Calu3 (cell line): ENCODE measurements at regions of chr9 and their contacts with region 1.

Region 1: DNA sequence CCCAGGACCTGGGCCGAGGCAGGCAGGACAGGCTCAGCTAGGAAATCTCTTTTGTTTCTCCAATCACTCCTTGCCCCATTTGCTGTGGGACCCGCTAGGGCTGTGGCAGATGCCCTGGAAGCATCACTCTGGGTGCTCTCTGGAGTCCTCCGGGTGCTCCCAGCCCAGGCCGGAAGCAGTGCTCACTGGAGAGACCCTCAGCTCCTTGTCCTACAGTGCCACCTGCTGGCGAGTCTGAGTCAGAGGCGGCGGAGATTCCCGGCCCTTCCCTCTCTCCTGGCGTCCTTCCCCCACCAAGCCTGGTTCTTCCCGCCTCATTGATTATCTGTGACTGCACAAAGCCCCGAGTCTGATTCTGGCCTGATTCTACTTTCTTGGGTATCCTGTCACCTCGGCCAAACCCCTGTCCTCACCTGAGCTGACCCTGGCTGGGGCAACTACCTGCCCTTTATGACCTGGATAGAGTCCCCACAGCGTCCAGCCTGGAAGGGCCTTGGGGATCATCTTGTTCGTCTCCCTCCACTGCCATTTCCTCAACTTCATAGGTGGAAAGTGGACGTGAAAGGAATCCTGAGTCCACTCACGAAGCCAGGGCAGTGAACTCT is 7.3 kb upstream of the BARHL1 start:
- DNase-seq: peak; percentile 84
- H3K4me3 Mint-ChIP-seq: no peak overlapping the region
- H3K27ac Mint-ChIP-seq: no peak overlapping the region
- H3K4me1 Mint-ChIP-seq: peaks cover 10% of the 10 kb centered on the region
- H3K27me3 Mint-ChIP-seq: peaks cover 41% of the 10 kb centered on the region
- CTCF ChIP-seq: peak; percentile 87

Region 2: GRCh38 chr9:132141344-132141947 is 433.7 kb before region 1 on chr9:
- CTCF ChIA-PET with region 1: no interaction called
- intact Hi-C with region 1: no loop called
- DNase-seq: no peak
- H3K4me3 Mint-ChIP-seq: no peak overlapping the region
- H3K27ac Mint-ChIP-seq: no peak overlapping the region
- H3K4me1 Mint-ChIP-seq: no peaks in the 10 kb centered on the region
- H3K27me3 Mint-ChIP-seq: peaks cover 92% of the 10 kb centered on the region
- CTCF ChIP-seq: no peak

Region 3: GRCh38 chr9:132411091-132411508 is 164.0 kb before region 1 on chr9:
- CTCF ChIA-PET with region 1: interaction called, 3 read pairs
- intact Hi-C with region 1: loop called (anchors 5 kb)
- DNase-seq: peak; percentile 73
- H3K4me3 Mint-ChIP-seq: peak overlapping the region; percentile 52
- H3K27ac Mint-ChIP-seq: no peak overlapping the region
- H3K4me1 Mint-ChIP-seq: peaks cover 9% of the 10 kb centered on the region
- H3K27me3 Mint-ChIP-seq: peaks cover 31% of the 10 kb centered on the region
- CTCF ChIP-seq: peak; percentile 64

Region 4: DNA sequence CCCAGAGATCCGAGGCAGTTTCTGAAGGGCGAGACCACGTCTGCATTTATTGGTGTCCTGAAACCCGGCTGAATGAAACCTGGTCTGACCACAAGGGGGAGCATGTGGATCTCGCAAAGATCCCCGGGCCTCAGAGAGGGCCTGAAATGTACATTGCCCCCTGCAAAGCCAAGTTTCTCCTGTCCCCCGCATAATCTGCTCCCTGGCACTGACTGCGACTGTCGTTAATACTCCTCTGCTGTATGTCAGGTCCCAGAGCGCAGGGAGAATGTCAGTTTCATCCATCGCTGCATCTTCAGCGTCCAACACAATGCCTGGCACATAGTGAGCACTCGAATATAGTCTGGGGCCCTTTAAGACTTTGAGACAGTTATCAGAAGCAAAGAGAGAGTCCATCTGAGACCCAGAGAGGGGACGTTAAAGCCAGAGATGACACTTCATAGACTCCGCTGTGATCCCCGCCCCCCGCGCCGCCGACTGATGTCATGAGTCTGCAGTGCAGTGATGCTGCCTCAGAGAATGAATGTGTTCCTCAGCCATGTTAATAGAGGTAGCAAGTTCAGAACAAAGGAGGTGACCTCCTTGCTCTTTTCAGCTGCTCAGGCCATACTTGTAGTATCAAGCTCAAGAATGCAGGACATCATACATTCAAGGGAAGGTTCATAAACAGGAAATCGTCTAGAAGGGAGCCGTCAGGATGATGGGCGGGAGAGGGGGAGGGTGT is 67.2 kb before region 1 on chr9:
- CTCF ChIA-PET with region 1: no interaction called
- intact Hi-C with region 1: loop called (anchors 2 kb)
- DNase-seq: peak; percentile 75
- H3K4me3 Mint-ChIP-seq: no peak overlapping the region
- H3K27ac Mint-ChIP-seq: no peak overlapping the region
- H3K4me1 Mint-ChIP-seq: no peaks in the 10 kb centered on the region
- H3K27me3 Mint-ChIP-seq: peaks cover 9% of the 10 kb centered on the region
- CTCF ChIP-seq: peak; percentile 55

Region 5: DNA sequence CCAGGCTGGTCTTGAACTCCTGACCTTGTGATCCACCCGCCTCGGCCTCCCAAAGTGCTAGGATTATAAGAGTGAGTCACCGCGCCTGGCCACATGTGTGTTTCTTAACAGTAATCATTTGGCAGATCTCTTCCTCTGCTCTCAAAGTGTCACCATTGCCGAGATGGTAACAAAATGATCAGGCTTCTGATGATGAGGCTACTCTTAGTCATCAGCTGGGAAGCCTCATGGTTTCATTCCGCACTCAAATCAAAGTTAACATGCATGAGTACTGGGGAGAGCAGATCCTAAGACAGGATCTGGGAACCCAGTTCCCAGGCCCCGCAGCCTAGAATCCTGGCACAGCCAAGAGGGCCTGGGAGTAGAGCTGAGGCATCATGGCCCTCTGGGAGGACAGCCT is 34.7 kb after region 1 on chr9:
- CTCF ChIA-PET with region 1: interaction called, 11 read pairs
- intact Hi-C with region 1: no loop called
- DNase-seq: no peak
- H3K4me3 Mint-ChIP-seq: no peak overlapping the region
- H3K27ac Mint-ChIP-seq: no peak overlapping the region
- H3K4me1 Mint-ChIP-seq: no peaks in the 10 kb centered on the region
- H3K27me3 Mint-ChIP-seq: no peaks in the 10 kb centered on the region
- CTCF ChIP-seq: no peak